Activated CD8-positive, alpha-beta T cell treated with anti-CD3 and anti-CD28 coated beads, Interleukin-2, amount 10 ng/mL, durations not matched to agents 7 days and 5 days (primary cell): ENCODE measurements at regions of chr15 and their contacts with region 1.

Region 1: GRCh38 chr15:43204016-43204901 is 16.6 kb downstream of the EPB42 start:
- DNase-seq: peak; percentile 73
- ATAC-seq: peak; percentile 75
- H3K4me3 Mint-ChIP-seq: no peak overlapping the region
- H3K27ac Mint-ChIP-seq: no peak overlapping the region
- H3K4me1 Mint-ChIP-seq: peaks cover 17% of the 10 kb centered on the region
- H3K27me3 Mint-ChIP-seq: peaks cover 15% of the 10 kb centered on the region

Region 2: DNA sequence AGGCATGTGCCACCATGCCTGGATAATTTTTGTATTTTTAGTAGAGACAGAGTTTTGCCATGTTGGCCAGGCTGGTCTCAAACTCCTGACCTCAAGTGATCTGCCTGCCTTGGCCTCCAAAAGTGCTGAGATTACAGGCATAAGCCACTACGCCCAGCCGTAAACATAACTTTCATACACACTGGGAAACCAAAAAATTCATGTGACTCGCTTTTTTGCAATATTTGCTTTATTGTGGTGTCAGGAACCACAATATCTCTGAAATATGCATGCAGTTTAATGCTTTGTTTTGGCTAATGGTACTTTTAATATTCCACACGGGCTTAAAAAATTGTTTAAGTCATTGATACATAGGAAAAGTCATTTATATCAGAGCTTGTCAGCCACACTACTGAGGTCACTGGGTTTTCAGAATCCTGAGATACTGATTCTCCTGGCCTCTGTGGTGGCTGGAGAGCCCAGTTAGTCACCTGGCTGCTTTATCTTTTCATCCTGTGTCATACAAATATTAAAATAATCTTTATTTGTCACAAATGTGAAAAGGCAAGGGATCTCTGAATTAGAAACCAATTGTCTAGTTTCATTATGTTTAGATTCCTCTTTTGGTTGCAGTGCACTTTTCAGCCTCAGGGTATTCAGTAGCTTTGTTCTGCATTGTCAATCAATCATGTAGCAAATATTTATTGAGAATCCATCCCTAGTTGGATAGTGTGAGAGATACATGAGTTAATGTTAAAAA is 60.9 kb before region 1 on chr15:
- CTCF ChIA-PET with region 1: no interaction called
- POLR2A ChIA-PET with region 1: no interaction called
- DNase-seq: no peak
- ATAC-seq: no peak
- H3K4me3 Mint-ChIP-seq: no peak overlapping the region
- H3K27ac Mint-ChIP-seq: no peak overlapping the region
- H3K4me1 Mint-ChIP-seq: peaks cover 25% of the 10 kb centered on the region
- H3K27me3 Mint-ChIP-seq: no peaks in the 10 kb centered on the region

Region 3: GRCh38 chr15:43168192-43169107 is 35.8 kb before region 1 on chr15:
- CTCF ChIA-PET with region 1: no interaction called
- POLR2A ChIA-PET with region 1: no interaction called
- DNase-seq: no peak
- ATAC-seq: no peak
- H3K4me3 Mint-ChIP-seq: no peak overlapping the region
- H3K27ac Mint-ChIP-seq: peak overlapping the region; percentile 25
- H3K4me1 Mint-ChIP-seq: peaks cover 9% of the 10 kb centered on the region
- H3K27me3 Mint-ChIP-seq: no peaks in the 10 kb centered on the region

Region 4: GRCh38 chr15:43185157-43186017 is 18.9 kb before region 1 on chr15 and contains the start of gene CCNDBP1:
- CTCF ChIA-PET with region 1: interaction called, 24 read pairs
- POLR2A ChIA-PET with region 1: no interaction called
- DNase-seq: peak; percentile 95
- ATAC-seq: peak; percentile 94
- H3K4me3 Mint-ChIP-seq: peak within 1 kb of the TSS; percentile 93
- H3K27ac Mint-ChIP-seq: peak within 1 kb of the TSS; percentile 96
- H3K4me1 Mint-ChIP-seq: peaks cover 37% of the 10 kb centered on the region
- H3K27me3 Mint-ChIP-seq: no peaks in the 10 kb centered on the region
- total RNA-seq, gene CCNDBP1: 58.0 to 63.2 TPM

Region 5: DNA sequence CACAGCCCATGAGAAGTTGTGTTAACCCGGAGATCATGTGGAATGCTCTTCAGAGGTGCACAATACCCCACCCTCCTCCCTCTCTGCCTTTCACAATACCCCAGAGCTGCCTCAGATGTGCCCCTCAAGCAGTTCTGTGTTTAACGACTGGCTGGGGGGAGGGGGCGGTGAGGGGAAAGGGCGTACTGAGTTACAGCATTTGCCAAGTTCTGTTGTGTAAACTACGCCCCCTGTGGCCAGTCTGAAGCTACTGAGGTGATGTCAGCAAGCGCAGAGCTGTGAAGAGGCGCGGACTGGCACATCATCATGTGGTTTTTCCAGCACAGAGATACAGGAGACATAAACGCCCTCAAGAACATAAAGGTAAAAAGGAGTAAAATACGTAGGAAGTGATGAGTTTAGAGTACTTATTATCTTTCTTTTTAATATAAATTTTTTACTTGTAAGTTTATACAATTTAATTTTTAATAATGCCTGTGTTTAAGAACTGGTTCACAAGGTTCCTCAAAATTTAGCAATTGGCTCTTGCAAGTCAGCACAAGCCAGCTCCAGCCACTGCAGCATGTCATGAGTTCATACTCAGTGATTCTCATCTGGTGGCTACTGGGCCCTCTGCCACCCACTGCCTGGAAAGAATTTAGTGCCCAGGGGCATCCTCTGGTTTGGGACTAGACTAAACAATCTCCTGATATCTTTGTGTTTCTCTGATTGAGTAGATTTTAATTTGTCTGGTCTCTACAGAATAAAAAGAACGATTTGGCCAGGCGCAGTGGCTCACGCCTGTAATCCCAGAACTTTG is 14.8 kb after region 1 on chr15:
- CTCF ChIA-PET with region 1: interaction called, 11 read pairs
- POLR2A ChIA-PET with region 1: no interaction called
- DNase-seq: no peak
- ATAC-seq: no peak
- H3K4me3 Mint-ChIP-seq: no peak overlapping the region
- H3K27ac Mint-ChIP-seq: no peak overlapping the region
- H3K4me1 Mint-ChIP-seq: no peaks in the 10 kb centered on the region
- H3K27me3 Mint-ChIP-seq: peaks cover 20% of the 10 kb centered on the region

Region 6: GRCh38 chr15:43241100-43241499 is 36.8 kb after region 1 on chr15:
- CTCF ChIA-PET with region 1: no interaction called
- POLR2A ChIA-PET with region 1: no interaction called
- DNase-seq: no peak
- ATAC-seq: no peak
- H3K4me3 Mint-ChIP-seq: no peak overlapping the region
- H3K27ac Mint-ChIP-seq: no peak overlapping the region
- H3K4me1 Mint-ChIP-seq: peaks cover 55% of the 10 kb centered on the region
- H3K27me3 Mint-ChIP-seq: no peaks in the 10 kb centered on the region

Region 7: GRCh38 chr15:43268111-43269105 is 64.1 kb after region 1 on chr15:
- CTCF ChIA-PET with region 1: interaction called, 15 read pairs
- POLR2A ChIA-PET with region 1: no interaction called
- DNase-seq: peak; percentile 63
- ATAC-seq: peak; percentile 59
- H3K4me3 Mint-ChIP-seq: no peak overlapping the region
- H3K27ac Mint-ChIP-seq: no peak overlapping the region
- H3K4me1 Mint-ChIP-seq: peaks cover 22% of the 10 kb centered on the region
- H3K27me3 Mint-ChIP-seq: peaks cover 28% of the 10 kb centered on the region

Region 8: DNA sequence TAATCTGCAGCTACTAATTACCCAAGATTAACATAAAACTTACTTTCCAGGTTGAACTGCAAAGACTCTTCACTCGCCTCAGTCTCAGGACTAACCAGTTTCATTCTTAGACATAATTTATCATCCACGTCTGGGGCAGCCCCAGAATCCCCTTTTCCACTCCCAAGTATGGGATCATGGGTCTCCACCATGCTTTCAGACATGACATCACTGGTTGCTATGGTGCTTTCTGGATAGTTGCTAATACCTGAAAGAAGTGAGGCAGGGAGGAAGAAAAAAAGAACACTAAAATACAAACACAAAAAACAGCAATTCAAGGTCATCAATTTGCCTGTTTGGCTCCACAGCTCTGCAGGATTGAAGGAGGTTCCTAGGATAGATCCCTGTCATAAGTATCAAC is 242.1 kb after region 1 on chr15:
- CTCF ChIA-PET with region 1: no interaction called
- POLR2A ChIA-PET with region 1: no interaction called
- DNase-seq: no peak
- ATAC-seq: no peak
- H3K4me3 Mint-ChIP-seq: no peak overlapping the region
- H3K27ac Mint-ChIP-seq: no peak overlapping the region
- H3K4me1 Mint-ChIP-seq: peaks cover 3% of the 10 kb centered on the region
- H3K27me3 Mint-ChIP-seq: no peaks in the 10 kb centered on the region